PC-9 (cell line): ENCODE measurements at regions of chr14 and their contacts with region 1.

Region 1: DNA sequence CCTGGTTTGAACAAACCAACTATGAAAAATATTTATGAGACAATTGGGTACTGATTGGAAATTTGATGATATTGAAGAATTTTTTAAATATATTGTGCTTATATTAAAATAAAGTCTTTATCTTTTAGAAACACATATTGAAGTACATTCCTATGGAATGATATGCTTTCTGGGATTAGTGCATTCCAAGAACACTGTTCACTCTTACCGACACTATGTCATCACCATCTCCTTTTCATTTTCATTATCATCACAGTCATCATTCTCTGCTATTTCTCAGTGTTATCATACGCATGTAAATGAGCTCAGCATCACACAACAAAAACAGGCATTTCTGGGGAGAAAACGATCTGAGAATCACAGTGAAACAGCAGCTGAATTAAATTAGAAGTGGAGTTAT is 513.3 kb upstream of the CCDC196 start:
- DNase-seq: no peak
- H3K4me3 ChIP-seq: no peak overlapping the region
- H3K27ac ChIP-seq: no peak overlapping the region
- H3K4me1 ChIP-seq: no peaks in the 10 kb centered on the region
- H3K27me3 ChIP-seq: 0 out of 2 replicates have a peak, but pooled peaks cover 6% of the 10 kb centered on the region
- CTCF ChIP-seq: no peak

Region 2: GRCh38 chr14:65993103-65993502 is 20.2 kb after region 1 on chr14:
- CTCF ChIA-PET with region 1: interaction called, 17 read pairs
- POLR2A ChIA-PET with region 1: no interaction called
- intact Hi-C with region 1: no loop called
- DNase-seq: peak in 1 of 2 experiments; percentile 56
- H3K4me3 ChIP-seq: no peak overlapping the region
- H3K27ac ChIP-seq: no peak overlapping the region
- H3K4me1 ChIP-seq: no peaks in the 10 kb centered on the region
- H3K27me3 ChIP-seq: 0 out of 2 replicates have a peak, but pooled peaks cover 4% of the 10 kb centered on the region
- CTCF ChIP-seq: no peak

Region 3: GRCh38 chr14:66163023-66163422 is 190.1 kb after region 1 on chr14:
- CTCF ChIA-PET with region 1: no interaction called
- POLR2A ChIA-PET with region 1: no interaction called
- intact Hi-C with region 1: no loop called
- DNase-seq: peak in 1 of 2 experiments; percentile 11
- H3K4me3 ChIP-seq: no peak overlapping the region
- H3K27ac ChIP-seq: no peak overlapping the region
- H3K4me1 ChIP-seq: no peaks in the 10 kb centered on the region
- H3K27me3 ChIP-seq: no peaks in the 10 kb centered on the region
- CTCF ChIP-seq: no peak